SK-N-SH (cell line): ENCODE measurements at regions of chr2 and their contacts with region 1.

Region 1: GRCh38 chr2:176638167-176639015 is 369.1 kb downstream of the MTX2 start:
- DNase-seq: peak; percentile 89
- H3K4me3 ChIP-seq: peak overlapping the region; percentile 75 to 82
- H3K27ac ChIP-seq: peak overlapping the region; percentile 73 to 96
- H3K4me1 ChIP-seq: peaks cover 26 to 28% of the 10 kb centered on the region in 2 experiments; a peak in 3 of 4 replicates
- H3K27me3 ChIP-seq: no peaks in the 10 kb centered on the region
- CTCF ChIP-seq: peak; percentile 91
- EP300 ChIP-seq: peak in 1 of 2 experiments; percentile 74; a peak in 1 of 4 replicates
- RAD21 ChIP-seq: peak; percentile 81

Region 2: GRCh38 chr2:176110975-176111663 is 527.3 kb before region 1 on chr2:
- CTCF ChIA-PET with region 1: interaction called, 22 read pairs
- POLR2A ChIA-PET with region 1: interaction called, 4 read pairs
- DNase-seq: peak; percentile 88
- H3K4me3 ChIP-seq: peak overlapping the region in 1 of 2 experiments; percentile 19; a peak in 1 of 4 replicates
- H3K27ac ChIP-seq: no peak overlapping the region
- H3K4me1 ChIP-seq: peaks cover 0 to 4% of the 10 kb centered on the region in 2 experiments; a peak in 2 of 4 replicates
- H3K27me3 ChIP-seq: peaks cover 70% of the 10 kb centered on the region
- CTCF ChIP-seq: peak; percentile 90
- EP300 ChIP-seq: no peak
- RAD21 ChIP-seq: peak; percentile 65

Region 3: DNA sequence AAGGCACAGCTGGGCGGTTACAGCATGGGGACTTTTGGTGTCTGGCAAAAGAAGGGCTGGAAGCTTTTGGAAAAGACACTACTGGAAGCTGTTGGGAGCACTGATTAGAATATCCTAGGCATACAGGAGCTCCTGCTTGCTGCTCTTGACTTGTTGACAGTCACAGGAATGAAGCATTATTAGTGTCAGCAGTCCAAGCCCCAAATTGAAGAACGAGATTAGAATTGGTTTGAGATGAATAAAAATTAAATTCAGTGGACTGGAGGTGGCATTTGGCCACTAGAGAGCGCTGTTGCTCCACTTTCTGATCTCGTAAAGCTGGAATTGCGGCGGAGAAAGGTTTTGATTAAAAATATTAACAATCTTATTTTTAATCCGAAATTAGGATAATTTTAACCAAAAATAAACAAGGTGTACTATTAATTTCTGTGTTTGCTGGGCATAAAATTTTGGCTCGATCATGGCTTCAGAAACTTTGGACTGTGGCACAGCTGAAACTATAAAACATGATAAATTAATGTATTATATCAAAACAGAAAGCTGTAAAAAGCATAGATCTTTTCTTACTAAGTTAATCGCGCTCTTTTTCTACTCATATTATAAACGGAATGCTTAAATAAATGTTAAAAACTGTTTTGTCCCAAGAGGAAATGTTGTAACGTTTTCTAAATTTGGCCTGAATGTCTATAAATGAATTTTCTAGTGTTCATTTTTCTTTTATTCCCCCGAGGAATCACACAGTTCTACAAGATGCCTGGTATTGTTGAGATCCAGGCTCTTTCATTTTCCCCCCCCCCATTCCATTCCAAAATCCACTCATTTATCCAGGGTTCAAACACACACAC is 511.2 kb before region 1 on chr2:
- CTCF ChIA-PET with region 1: interaction called, 1,047 read pairs
- POLR2A ChIA-PET with region 1: interaction called, 45 read pairs
- DNase-seq: peak; percentile 63
- H3K4me3 ChIP-seq: peak overlapping the region; percentile 19 to 25; a peak in 1 of 4 replicates
- H3K27ac ChIP-seq: no peak overlapping the region; a peak in 1 of 4 replicates
- H3K4me1 ChIP-seq: peaks cover 4 to 20% of the 10 kb centered on the region in 2 experiments; a peak in 3 of 4 replicates
- H3K27me3 ChIP-seq: no peaks in the 10 kb centered on the region; the same call in 1 of the 2 replicates
- CTCF ChIP-seq: peak; percentile 97
- EP300 ChIP-seq: no peak; a peak in 1 of 4 replicates
- RAD21 ChIP-seq: peak; percentile 94

Region 4: DNA sequence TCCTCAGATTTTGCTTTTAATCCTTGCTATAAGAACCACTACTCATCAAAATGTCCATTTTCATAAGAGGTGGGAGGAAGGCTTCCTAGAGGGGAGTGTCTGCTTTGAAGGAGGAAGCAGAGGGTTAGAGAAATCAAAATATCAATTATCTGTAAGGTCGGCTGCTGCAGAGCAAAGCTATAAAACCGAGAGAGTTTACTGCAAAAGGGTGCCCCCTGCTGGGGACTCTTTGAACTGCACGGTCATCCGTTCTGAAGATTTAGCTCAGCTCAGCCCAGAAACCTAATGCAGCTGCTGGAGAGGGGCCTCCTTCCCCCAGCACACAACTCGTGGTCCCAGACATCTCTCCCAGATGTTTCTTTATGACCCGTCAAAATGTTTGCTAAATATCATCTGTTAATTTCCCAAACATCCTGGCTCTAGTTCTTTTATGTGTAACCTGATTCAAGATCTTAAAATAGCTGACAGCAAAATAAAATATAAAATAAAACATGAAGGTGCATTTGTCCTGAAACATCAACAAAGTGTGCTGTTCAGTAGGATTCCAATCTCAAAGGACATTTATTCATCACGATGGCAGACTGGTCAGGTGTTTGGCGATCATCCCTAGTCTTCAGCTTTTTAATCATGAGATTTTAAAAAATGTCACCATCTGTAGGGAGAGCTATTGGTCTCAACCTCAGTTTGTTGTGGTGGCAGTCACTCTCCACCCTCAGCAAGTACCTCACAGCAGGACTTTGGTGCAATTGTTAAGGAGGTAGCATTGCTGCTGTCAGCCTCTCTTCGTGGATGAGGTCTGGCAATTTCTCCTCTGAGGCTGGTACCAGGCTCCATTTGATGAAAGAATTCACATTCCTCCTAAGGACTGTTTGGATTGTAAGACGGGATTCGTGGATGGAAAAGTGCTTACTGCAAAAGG is 183.2 kb before region 1 on chr2:
- CTCF ChIA-PET with region 1: interaction called, 35 read pairs
- POLR2A ChIA-PET with region 1: interaction called, 7 read pairs
- DNase-seq: peak; percentile 64
- H3K4me3 ChIP-seq: no peak overlapping the region; a peak in 1 of 4 replicates
- H3K27ac ChIP-seq: peak overlapping the region in 1 of 2 experiments; percentile 78; a peak in 2 of 4 replicates
- H3K4me1 ChIP-seq: peaks cover 0 to 16% of the 10 kb centered on the region in 2 experiments; a peak in 2 of 4 replicates
- H3K27me3 ChIP-seq: no peaks in the 10 kb centered on the region
- CTCF ChIP-seq: peak; percentile 94
- EP300 ChIP-seq: no peak
- RAD21 ChIP-seq: peak; percentile 88

Region 5: GRCh38 chr2:176574484-176575236 is 63.7 kb before region 1 on chr2:
- CTCF ChIA-PET with region 1: interaction called, 75 read pairs
- POLR2A ChIA-PET with region 1: interaction called, 44 read pairs
- DNase-seq: peak; percentile 59
- H3K4me3 ChIP-seq: no peak overlapping the region; a peak in 1 of 4 replicates
- H3K27ac ChIP-seq: peak overlapping the region; percentile 39 to 99; a peak in 3 of 4 replicates
- H3K4me1 ChIP-seq: peaks cover 7 to 45% of the 10 kb centered on the region in 2 experiments
- H3K27me3 ChIP-seq: no peaks in the 10 kb centered on the region
- CTCF ChIP-seq: no peak
- EP300 ChIP-seq: peak; percentile 83 to 100
- RAD21 ChIP-seq: peak; percentile 42

Region 6: DNA sequence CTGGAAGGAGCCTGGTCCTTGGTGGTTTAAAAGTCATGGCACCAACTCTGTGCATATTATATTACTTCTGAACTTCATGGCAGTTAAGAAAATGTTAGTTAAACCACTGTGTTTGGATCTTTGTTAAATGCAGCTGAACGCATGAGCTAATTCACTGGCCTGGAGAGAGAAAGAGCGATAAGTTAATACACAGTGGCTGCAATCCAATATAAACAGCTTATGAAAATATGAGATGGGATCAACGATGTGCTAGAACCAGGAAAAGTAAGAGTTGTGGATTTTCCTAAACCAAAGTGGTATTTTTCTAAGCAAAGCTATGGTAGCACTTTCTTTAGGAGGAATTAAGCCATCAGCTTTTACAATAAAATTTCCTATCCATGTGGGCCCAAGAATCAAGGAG is 42.4 kb before region 1 on chr2:
- CTCF ChIA-PET with region 1: interaction called, 13 read pairs
- POLR2A ChIA-PET with region 1: no interaction called
- DNase-seq: no peak
- H3K4me3 ChIP-seq: no peak overlapping the region
- H3K27ac ChIP-seq: no peak overlapping the region
- H3K4me1 ChIP-seq: no peaks in the 10 kb centered on the region; a peak in 1 of 4 replicates
- H3K27me3 ChIP-seq: no peaks in the 10 kb centered on the region
- CTCF ChIP-seq: no peak
- EP300 ChIP-seq: no peak
- RAD21 ChIP-seq: no peak

Region 7: GRCh38 chr2:176653479-176654443 is 15.4 kb after region 1 on chr2:
- CTCF ChIA-PET with region 1: interaction called, 150 read pairs
- POLR2A ChIA-PET with region 1: interaction called, 8 read pairs
- DNase-seq: peak; percentile 61
- H3K4me3 ChIP-seq: peak overlapping the region in 1 of 2 experiments; percentile 18; a peak in 1 of 4 replicates
- H3K27ac ChIP-seq: peak overlapping the region; percentile 25 to 80; a peak in 3 of 4 replicates
- H3K4me1 ChIP-seq: peaks cover 8 to 41% of the 10 kb centered on the region in 2 experiments; a peak in 3 of 4 replicates
- H3K27me3 ChIP-seq: no peaks in the 10 kb centered on the region
- CTCF ChIP-seq: peak; percentile 75
- EP300 ChIP-seq: no peak
- RAD21 ChIP-seq: peak; percentile 76